Caco-2 (cell line): ENCODE measurements at regions of chr5 and their contacts with region 1.

Region 1: GRCh38 chr5:76852772-76853171 is 3.0 kb downstream of the S100Z start:
- DNase-seq: no peak
- H3K4me3 ChIP-seq: no peak overlapping the region
- H3K4me3 Mint-ChIP-seq: no peak overlapping the region
- H3K27ac Mint-ChIP-seq: no peak overlapping the region
- H3K4me1 ChIP-seq: peaks cover 46% of the 10 kb centered on the region
- H3K4me1 Mint-ChIP-seq: peaks cover 35% of the 10 kb centered on the region
- H3K27me3 ChIP-seq: no peaks in the 10 kb centered on the region
- H3K27me3 Mint-ChIP-seq: no peaks in the 10 kb centered on the region
- CTCF ChIP-seq: no peak

Region 2: GRCh38 chr5:76947082-76947503 is 94.3 kb after region 1 on chr5:
- CTCF ChIA-PET with region 1: interaction called, 12 read pairs
- POLR2A ChIA-PET with region 1: no interaction called
- intact Hi-C with region 1: no loop called
- DNase-seq: no peak
- H3K4me3 ChIP-seq: no peak overlapping the region
- H3K4me3 Mint-ChIP-seq: no peak overlapping the region
- H3K27ac Mint-ChIP-seq: no peak overlapping the region
- H3K4me1 ChIP-seq: peaks cover 7% of the 10 kb centered on the region; the same call in 1 of the 2 replicates
- H3K4me1 Mint-ChIP-seq: peaks cover 15% of the 10 kb centered on the region
- H3K27me3 ChIP-seq: no peaks in the 10 kb centered on the region
- H3K27me3 Mint-ChIP-seq: no peaks in the 10 kb centered on the region
- CTCF ChIP-seq: no peak